CD4-positive, alpha-beta memory T cell (primary cell): ENCODE measurements at regions of chr16 and their contacts with region 1.

Region 1: DNA sequence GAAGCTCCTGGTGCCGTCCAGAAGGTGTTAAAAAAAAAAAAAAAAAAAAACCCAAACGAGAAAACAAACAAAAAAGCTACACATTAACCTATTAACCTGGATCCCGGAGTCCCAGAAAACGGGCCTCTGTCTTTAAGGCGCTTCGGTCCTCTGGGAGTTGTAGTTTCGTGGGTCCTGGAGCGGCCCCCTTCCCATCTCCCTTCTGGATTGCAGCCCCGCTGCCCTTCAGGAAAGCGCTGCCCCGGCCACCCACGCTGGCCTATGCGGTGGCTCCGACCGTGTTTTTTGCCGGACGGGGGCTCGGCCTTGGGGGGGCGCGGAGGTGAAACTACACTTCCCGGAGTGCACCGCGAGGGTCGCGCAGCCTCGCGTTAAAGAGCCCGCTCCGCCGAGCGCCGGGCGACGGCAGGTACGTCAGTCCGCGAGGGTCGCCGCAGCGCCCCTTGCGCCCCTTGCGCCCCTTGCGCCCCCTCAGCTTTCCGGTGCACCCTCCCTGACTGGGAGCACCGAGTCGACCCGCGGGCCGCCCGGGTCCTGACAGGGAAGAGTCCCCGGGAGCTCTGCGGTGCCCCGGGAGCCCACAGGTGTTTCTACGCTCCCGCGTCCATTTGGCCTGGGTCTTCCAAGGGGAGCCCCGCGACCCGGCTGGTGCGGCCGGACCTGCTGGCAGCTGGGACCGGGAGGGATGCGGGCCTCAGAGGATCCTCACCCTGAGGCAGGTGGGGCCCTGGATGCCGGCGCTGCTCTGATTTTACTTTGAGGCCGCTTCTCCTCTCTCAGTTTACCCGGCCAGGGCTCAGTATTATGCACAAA is at the start of gene FCSK:
- DNase-seq: peak; percentile 74 to 89 (median 85)
- H3K4me3 ChIP-seq: peak within 1 kb of the TSS; percentile 74 to 98
- H3K4me3 Mint-ChIP-seq: peak within 1 kb of the TSS; percentile 89 to 96 (median 91)
- H3K27ac ChIP-seq: peak within 1 kb of the TSS; percentile 91
- H3K27ac Mint-ChIP-seq: peak within 1 kb of the TSS; percentile 88 to 95 (median 92)
- H3K4me1 ChIP-seq: peaks cover 21% of the 10 kb centered on the region
- H3K4me1 Mint-ChIP-seq: peaks cover 16 to 22% (median 20%) of the 10 kb centered on the region in 4 donors
- H3K27me3 ChIP-seq: no peaks in the 10 kb centered on the region
- H3K27me3 Mint-ChIP-seq: peaks cover 0 to 2% of the 10 kb centered on the region in 2 donors
- total RNA-seq, gene FCSK: 41.7 to 42.8 TPM

Region 2: GRCh38 chr16:70289229-70290098 is 165.0 kb before region 1 on chr16 and contains the start of gene AARS1:
- CTCF ChIA-PET with region 1: no interaction called
- POLR2A ChIA-PET with region 1: no interaction called
- intact Hi-C with region 1: no loop called
- DNase-seq: peak; percentile 95 to 97 (median 96)
- H3K4me3 ChIP-seq: peak within 1 kb of the TSS; percentile 49 to 76
- H3K4me3 Mint-ChIP-seq: peak within 1 kb of the TSS; percentile 96 to 99 (median 98)
- H3K27ac ChIP-seq: peak within 1 kb of the TSS; percentile 87
- H3K27ac Mint-ChIP-seq: peak within 1 kb of the TSS; percentile 90 to 99 (median 98)
- H3K4me1 ChIP-seq: peaks cover 10% of the 10 kb centered on the region
- H3K4me1 Mint-ChIP-seq: peaks cover 7 to 27% (median 20%) of the 10 kb centered on the region in 4 donors
- H3K27me3 ChIP-seq: no peaks in the 10 kb centered on the region
- H3K27me3 Mint-ChIP-seq: no peaks in the 10 kb centered on the region
- total RNA-seq, gene AARS1: 102 to 103 TPM

Region 3: DNA sequence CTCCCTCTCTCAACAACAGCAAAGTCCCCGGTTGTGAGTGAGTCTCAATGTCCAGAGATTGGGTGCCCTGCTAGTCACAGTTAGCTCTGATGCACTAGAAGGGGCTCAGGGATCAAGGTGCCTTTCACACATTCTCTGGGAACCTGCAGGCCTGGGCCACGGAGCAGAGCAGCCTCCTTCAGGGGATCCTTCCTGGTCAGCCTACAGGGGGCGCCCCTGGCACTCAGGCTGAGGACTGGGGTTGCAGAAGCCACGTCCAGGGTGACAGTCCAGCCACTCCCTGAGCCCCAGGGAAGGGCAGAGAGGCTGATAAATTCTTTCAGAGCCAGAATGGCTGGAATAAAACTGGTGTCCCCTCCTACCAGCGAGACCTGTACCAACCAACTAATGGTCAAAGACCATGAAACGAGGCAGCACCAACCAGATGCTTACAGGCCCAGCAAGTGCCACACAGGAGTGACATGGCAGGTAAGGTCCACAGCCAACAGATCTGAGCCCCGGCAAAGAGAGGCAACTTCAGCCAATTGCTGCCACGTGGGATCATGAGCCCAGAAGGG is 59.0 kb before region 1 on chr16:
- CTCF ChIA-PET with region 1: interaction called, 15 read pairs
- POLR2A ChIA-PET with region 1: no interaction called
- intact Hi-C with region 1: no loop called
- DNase-seq: peak in 4 of 5 donors; percentile 48 to 50 (median 49)
- H3K4me3 ChIP-seq: no peak overlapping the region
- H3K4me3 Mint-ChIP-seq: no peak overlapping the region
- H3K27ac ChIP-seq: no peak overlapping the region
- H3K27ac Mint-ChIP-seq: peak overlapping the region in 2 of 7 donors; percentile 63 to 66
- H3K4me1 ChIP-seq: no peaks in the 10 kb centered on the region
- H3K4me1 Mint-ChIP-seq: peaks cover 0 to 2% (median under 1%) of the 10 kb centered on the region in 4 donors
- H3K27me3 ChIP-seq: no peaks in the 10 kb centered on the region
- H3K27me3 Mint-ChIP-seq: no peaks in the 10 kb centered on the region

Region 4: GRCh38 chr16:70402916-70403659 is 51.3 kb before region 1 on chr16:
- CTCF ChIA-PET with region 1: no interaction called
- POLR2A ChIA-PET with region 1: interaction called, 3 read pairs
- intact Hi-C with region 1: loop called (anchors 1 kb)
- DNase-seq: no peak
- H3K4me3 ChIP-seq: no peak overlapping the region
- H3K4me3 Mint-ChIP-seq: peak overlapping the region in 3 of 8 donors; percentile 26 to 41 (median 36)
- H3K27ac ChIP-seq: no peak overlapping the region
- H3K27ac Mint-ChIP-seq: peak overlapping the region in 6 of 7 donors; percentile 7 to 93 (median 78)
- H3K4me1 ChIP-seq: peaks cover 28% of the 10 kb centered on the region
- H3K4me1 Mint-ChIP-seq: peaks cover 28 to 59% (median 41%) of the 10 kb centered on the region in 4 donors
- H3K27me3 ChIP-seq: no peaks in the 10 kb centered on the region
- H3K27me3 Mint-ChIP-seq: no peaks in the 10 kb centered on the region

Region 5: GRCh38 chr16:70627696-70628095 is 173.3 kb after region 1 on chr16:
- CTCF ChIA-PET with region 1: no interaction called
- POLR2A ChIA-PET with region 1: no interaction called
- intact Hi-C with region 1: no loop called
- DNase-seq: no peak
- H3K4me3 ChIP-seq: no peak overlapping the region
- H3K4me3 Mint-ChIP-seq: no peak overlapping the region
- H3K27ac ChIP-seq: no peak overlapping the region
- H3K27ac Mint-ChIP-seq: no peak overlapping the region
- H3K4me1 ChIP-seq: no peaks in the 10 kb centered on the region
- H3K4me1 Mint-ChIP-seq: peaks cover 0 to 2% (median 0%) of the 10 kb centered on the region in 4 donors
- H3K27me3 ChIP-seq: no peaks in the 10 kb centered on the region
- H3K27me3 Mint-ChIP-seq: peaks cover 5 to 6% of the 10 kb centered on the region in 2 donors